Lower leg skin (tissue), 4 donors: ENCODE measurements at regions of chr6 and their contacts with region 1.

Region 1: DNA sequence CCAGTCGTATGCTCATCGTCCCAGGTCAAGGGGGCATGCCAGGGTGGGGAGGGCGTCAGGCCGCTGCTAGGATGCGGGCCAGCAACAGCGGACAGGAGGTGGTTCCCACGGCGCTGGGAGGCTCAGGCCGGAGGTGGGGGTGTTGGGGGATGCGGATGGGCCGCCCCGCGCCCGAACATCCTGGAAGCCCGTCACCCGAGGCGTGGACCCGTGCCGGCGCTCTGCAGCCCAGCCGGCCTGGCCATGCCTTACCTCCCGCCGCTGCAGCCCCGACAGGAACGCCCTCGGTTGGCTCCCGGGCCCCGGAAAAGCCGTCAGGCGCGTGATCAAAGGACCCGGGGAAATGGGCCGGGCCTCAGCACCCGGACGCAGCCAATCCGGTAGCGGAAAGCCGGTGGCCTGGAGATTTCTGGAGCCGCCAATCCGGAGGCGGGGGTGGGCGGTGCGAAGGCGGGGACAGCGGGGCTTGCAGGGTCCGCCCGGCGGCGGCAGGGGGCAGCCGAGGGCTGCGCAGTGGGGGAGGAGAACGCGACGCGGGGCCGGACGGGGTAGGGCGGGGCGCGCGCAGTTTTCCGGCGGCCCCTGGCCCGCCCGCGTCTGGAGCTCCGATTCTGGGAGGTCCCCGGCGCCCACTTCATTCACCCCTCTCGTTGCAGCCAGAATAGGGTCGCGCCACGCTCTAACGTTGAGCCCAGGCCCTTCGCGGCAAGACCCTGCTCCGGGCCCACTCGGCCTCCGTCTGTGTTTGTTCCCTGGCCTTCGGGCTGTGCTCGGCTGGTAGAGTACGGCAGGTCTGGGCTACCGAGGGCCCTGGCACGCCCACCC is at the start of gene SMIM29:
- DNase-seq: peak; percentile 94 to 99
- H3K4me3 ChIP-seq: peak within 1 kb of the TSS; percentile 58
- CTCF ChIP-seq: no peak
- POLR2A ChIP-seq: peak in 1 of 2 donors; percentile 52
- total RNA-seq, gene SMIM29: 34.3 to 92.2 (median 57.1) TPM

Region 2: DNA sequence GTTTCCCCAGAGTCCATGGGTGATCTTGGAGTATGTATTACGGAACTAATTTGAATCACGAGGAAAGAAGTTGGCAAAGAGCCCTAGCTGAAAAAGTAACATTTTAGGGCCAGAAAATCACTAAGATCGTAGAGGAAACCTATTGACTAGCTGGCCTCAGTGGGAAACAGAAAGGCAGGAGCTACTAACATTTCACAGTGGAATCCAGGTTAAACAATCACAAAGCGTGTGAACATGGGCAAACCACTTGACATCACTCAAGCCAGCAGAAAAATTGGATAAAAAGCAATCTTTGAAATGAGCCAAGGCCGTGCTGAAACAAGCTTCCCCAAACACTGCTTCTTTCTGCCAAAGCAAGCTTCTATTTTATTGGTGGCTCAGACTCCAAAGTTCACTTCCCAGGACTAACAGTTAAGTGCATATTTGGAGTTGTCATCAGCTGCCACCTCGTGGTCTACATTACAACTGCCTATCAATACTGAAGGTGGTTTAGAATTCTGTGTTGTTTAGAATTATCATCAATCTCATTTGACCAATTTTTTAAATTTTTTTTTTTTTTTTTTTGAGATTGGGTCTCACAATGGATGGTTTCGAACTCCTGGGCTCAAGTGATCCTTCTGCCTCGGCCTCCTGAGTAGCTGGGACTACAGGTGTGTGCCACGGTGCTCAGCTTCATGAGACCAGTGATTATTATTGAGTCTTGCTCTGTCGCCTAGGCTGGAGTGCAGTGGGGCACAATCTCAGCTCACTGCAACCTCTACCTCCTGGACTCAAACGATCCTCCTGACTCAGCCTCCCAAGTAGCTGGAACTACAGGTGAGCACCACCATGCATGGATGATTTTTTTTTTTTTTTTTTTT is 166.3 kb after region 1 on chr6:
- intact Hi-C with region 1: loop called (anchors 10 kb)
- DNase-seq: peak in 1 of 2 donors; percentile 76
- H3K4me3 ChIP-seq: no peak overlapping the region
- CTCF ChIP-seq: peak in 1 of 3 donors; percentile 63
- POLR2A ChIP-seq: no peak